H1 (cell line): ENCODE measurements at regions of chrX and their contacts with region 1.

Region 1: DNA sequence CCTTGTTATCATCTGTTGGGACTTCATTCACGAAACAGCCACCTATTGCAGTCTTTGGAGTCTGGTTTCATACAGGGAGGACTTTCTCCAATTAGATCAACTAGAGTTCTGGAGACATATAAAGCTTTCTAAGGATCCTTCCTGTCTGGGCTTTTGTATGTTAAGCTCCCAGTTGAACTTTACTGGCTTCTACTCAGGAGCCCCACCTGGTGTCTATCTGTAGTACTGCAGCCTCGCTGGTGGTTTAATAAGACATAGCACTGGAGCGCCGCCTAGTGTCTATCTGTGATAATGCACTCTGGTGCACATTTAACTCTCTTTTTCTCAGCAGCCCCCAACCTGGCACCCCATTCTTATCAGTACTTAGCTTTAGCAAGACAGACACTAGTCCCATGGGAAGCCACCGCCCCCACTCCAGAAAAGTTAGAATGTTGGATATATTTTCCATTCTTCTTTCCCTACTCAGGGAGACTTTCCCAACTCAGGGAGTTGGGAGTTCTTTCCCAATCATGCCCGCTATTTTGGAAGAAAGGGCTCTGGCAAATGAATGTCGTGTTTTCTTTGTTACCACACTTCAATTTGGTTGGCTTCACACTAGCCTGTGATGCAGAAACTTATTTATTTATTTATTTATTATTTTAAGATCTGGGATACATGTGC is 36.9 kb upstream of the SYTL4 start:
- DNase-seq: peak; percentile 23 to 91
- H3K4me3 ChIP-seq: no peak overlapping the region
- H3K27ac ChIP-seq: no peak overlapping the region
- H3K4me1 ChIP-seq: no peaks in the 10 kb centered on the region
- H3K27me3 ChIP-seq: no peaks in the 10 kb centered on the region
- CTCF ChIP-seq: peak; percentile 20 to 100 (median 93)
- EP300 ChIP-seq: no peak
- POLR2A ChIP-seq: no peak
- RAD21 ChIP-seq: peak; percentile 92 to 97

Region 2: GRCh38 chrX:100674705-100675104 is 94.1 kb before region 1 on chrX:
- CTCF ChIA-PET with region 1: interaction called, 65 read pairs
- POLR2A ChIA-PET with region 1: no interaction called
- DNase-seq: no peak
- H3K4me3 ChIP-seq: no peak overlapping the region
- H3K27ac ChIP-seq: no peak overlapping the region
- H3K4me1 ChIP-seq: no peaks in the 10 kb centered on the region
- H3K27me3 ChIP-seq: no peaks in the 10 kb centered on the region
- CTCF ChIP-seq: no peak
- EP300 ChIP-seq: no peak
- POLR2A ChIP-seq: no peak
- RAD21 ChIP-seq: no peak

Region 3: GRCh38 chrX:100690617-100691016 is 78.2 kb before region 1 on chrX:
- CTCF ChIA-PET with region 1: interaction called, 129 read pairs
- POLR2A ChIA-PET with region 1: no interaction called
- DNase-seq: no peak
- H3K4me3 ChIP-seq: no peak overlapping the region
- H3K27ac ChIP-seq: no peak overlapping the region
- H3K4me1 ChIP-seq: no peaks in the 10 kb centered on the region
- H3K27me3 ChIP-seq: no peaks in the 10 kb centered on the region
- CTCF ChIP-seq: no peak
- EP300 ChIP-seq: no peak
- POLR2A ChIP-seq: no peak
- RAD21 ChIP-seq: no peak